Calu3 (cell line): ENCODE measurements at regions of chr1 and their contacts with region 1.

Region 1: GRCh38 chr1:165392634-165393571 is 36.4 kb upstream of the LMX1A start:
- DNase-seq: peak; percentile 88
- H3K4me3 Mint-ChIP-seq: no peak overlapping the region
- H3K27ac Mint-ChIP-seq: no peak overlapping the region
- H3K4me1 Mint-ChIP-seq: peaks cover 7% of the 10 kb centered on the region
- H3K27me3 Mint-ChIP-seq: peaks cover 98% of the 10 kb centered on the region
- CTCF ChIP-seq: peak; percentile 93

Region 2: GRCh38 chr1:165645654-165646366 is 252.9 kb after region 1 on chr1:
- CTCF ChIA-PET with region 1: interaction called, 3 read pairs
- intact Hi-C with region 1: loop called (anchors 5 kb)
- DNase-seq: peak; percentile 83
- H3K4me3 Mint-ChIP-seq: peak overlapping the region; percentile 32
- H3K27ac Mint-ChIP-seq: peak overlapping the region; percentile 79
- H3K4me1 Mint-ChIP-seq: peaks cover 32% of the 10 kb centered on the region
- H3K27me3 Mint-ChIP-seq: no peaks in the 10 kb centered on the region
- CTCF ChIP-seq: no peak